ENCODE measurements at regions of chr20 and their contacts with region 1.

Region 1: GRCh38 chr20:22333885-22334545 is 250.4 kb downstream of the FOXA2 start:
- DNase-seq: peak; percentile 68
- ATAC-seq: peak; percentile 51
- H3K4me3 Mint-ChIP-seq: no peak overlapping the region
- H3K27ac Mint-ChIP-seq: no peak overlapping the region
- H3K4me1 Mint-ChIP-seq: no peaks in the 10 kb centered on the region
- H3K27me3 Mint-ChIP-seq: peaks cover 13% of the 10 kb centered on the region

Region 2: DNA sequence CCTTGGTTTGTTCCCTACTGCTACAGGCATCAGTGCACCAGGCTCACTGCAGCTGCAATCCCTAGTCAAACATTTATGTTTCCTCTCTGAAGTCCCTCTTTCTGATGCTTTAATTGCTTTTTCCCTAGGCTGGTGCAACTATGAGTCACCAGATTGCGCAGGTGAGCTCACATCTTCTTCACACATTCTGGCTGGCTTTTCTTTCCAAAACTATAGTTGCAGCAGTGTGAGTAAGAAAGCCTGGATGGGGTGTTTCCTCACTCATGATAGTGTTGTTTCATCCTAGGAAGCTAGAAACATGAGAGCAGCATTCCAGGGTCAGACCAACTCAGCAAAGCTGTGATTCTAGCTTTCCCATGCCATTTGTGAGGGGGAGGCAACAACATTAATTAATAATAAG is 332.1 kb before region 1 on chr20:
- CTCF ChIA-PET with region 1: no interaction called
- POLR2A ChIA-PET with region 1: no interaction called
- intact Hi-C with region 1: no loop called
- DNase-seq: no peak
- ATAC-seq: no peak
- H3K4me3 Mint-ChIP-seq: no peak overlapping the region
- H3K27ac Mint-ChIP-seq: no peak overlapping the region
- H3K4me1 Mint-ChIP-seq: no peaks in the 10 kb centered on the region
- H3K27me3 Mint-ChIP-seq: no peaks in the 10 kb centered on the region

Region 3: DNA sequence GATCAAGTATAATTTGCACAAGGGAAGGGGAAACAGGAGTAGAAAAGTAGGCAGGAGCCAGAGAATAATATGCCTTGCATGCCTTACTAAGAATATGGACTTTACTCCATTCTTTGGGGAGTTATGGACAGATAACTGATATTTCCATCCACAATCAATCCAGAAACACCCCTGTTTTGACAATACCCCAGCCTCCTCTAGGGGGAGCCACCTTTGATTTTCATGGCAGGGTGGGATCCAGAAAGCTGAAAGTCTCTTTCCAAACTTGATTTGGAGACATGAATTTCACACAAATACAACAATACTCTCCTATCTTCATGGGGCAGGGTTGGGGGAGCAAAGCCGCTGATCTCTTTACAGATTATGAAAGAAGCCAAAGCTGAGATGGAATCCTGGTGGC is 153.8 kb before region 1 on chr20:
- CTCF ChIA-PET with region 1: no interaction called
- POLR2A ChIA-PET with region 1: no interaction called
- intact Hi-C with region 1: no loop called
- DNase-seq: peak; percentile 4
- ATAC-seq: no peak
- H3K4me3 Mint-ChIP-seq: no peak overlapping the region
- H3K27ac Mint-ChIP-seq: no peak overlapping the region
- H3K4me1 Mint-ChIP-seq: no peaks in the 10 kb centered on the region
- H3K27me3 Mint-ChIP-seq: no peaks in the 10 kb centered on the region

Region 4: GRCh38 chr20:22232923-22233322 is 101.1 kb before region 1 on chr20:
- CTCF ChIA-PET with region 1: no interaction called
- POLR2A ChIA-PET with region 1: no interaction called
- intact Hi-C with region 1: no loop called
- DNase-seq: no peak
- ATAC-seq: no peak
- H3K4me3 Mint-ChIP-seq: no peak overlapping the region
- H3K27ac Mint-ChIP-seq: no peak overlapping the region
- H3K4me1 Mint-ChIP-seq: no peaks in the 10 kb centered on the region
- H3K27me3 Mint-ChIP-seq: peaks cover 2% of the 10 kb centered on the region

Region 5: DNA sequence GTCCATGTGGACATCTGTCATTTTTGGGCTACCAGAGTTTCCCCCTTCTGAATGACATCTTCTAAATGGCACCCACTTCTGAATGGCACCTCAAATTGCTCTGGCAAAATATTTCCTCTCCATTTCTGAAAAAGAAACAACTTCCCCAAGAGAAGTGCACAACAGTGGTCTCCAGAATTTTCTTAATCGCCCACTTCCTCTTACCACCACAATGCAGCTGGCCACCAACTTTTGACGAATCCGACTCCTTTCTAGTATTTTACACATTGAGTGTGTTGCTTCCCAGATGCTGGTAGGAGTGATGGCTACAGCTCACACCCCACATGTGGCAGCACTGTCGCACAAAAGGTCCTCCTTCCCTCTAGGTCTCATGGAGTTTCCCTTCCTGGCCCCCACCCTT is 34.2 kb after region 1 on chr20:
- CTCF ChIA-PET with region 1: no interaction called
- POLR2A ChIA-PET with region 1: no interaction called
- intact Hi-C with region 1: no loop called
- DNase-seq: no peak
- ATAC-seq: no peak
- H3K4me3 Mint-ChIP-seq: no peak overlapping the region
- H3K27ac Mint-ChIP-seq: no peak overlapping the region
- H3K4me1 Mint-ChIP-seq: peaks cover 17% of the 10 kb centered on the region
- H3K27me3 Mint-ChIP-seq: peaks cover 2% of the 10 kb centered on the region

Region 6: GRCh38 chr20:22684072-22684762 is 350.2 kb after region 1 on chr20:
- CTCF ChIA-PET with region 1: interaction called, 19 read pairs
- POLR2A ChIA-PET with region 1: no interaction called
- intact Hi-C with region 1: loop called (anchors 1 kb)
- DNase-seq: peak; percentile 61
- ATAC-seq: peak; percentile 61
- H3K4me3 Mint-ChIP-seq: no peak overlapping the region
- H3K27ac Mint-ChIP-seq: no peak overlapping the region
- H3K4me1 Mint-ChIP-seq: peaks cover 3% of the 10 kb centered on the region
- H3K27me3 Mint-ChIP-seq: peaks cover 6% of the 10 kb centered on the region